ENCODE measurements at regions of chr2 and their contacts with region 1.

Region 1: DNA sequence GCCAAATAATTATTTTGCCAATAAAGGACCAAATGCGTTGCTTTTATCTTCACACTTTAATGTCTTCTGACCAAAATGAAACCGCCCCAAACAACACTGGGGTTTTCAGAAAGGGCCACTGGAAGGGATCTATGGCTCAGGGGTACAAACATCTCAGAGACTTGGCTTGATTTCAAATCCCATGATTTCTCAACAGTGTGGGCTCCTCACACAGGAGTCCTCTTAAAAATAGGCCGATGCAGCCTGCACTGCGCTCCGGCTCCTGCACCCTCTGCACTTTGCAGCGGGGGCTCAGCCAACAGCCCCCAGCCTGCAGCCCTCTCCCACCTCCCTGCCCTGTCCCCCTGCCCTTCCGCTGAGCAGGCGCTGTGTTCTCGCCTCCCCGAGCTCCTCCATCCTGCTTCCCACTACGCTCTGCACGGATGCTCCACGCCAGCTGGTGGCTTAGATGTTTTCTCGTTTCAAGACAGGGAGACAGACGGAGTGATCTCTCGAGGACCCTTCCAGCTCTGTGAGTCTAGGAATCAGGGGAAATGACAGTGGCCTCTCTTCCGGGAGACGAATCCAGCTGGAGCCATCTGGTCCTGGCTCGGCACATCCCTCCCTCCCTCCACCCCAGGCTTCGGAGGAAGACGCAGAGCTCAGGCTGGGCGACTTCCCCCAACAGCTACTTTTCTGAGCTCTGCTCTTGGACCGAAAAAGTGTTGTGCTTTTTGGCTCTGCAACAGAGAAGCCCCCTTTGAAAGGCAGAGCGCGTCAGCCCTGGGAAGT is 71.4 kb downstream of the KCNF1 start:
- DNase-seq: peak; percentile 77 to 87 (median 82)
- ATAC-seq: peak; percentile 72 to 85 (median 78)
- H3K4me3 ChIP-seq: peak overlapping the region in 6 of 12 donors; percentile 1 to 24 (median 14)
- H3K27ac ChIP-seq: peak overlapping the region; percentile 40 to 82 (median 72)
- H3K4me1 ChIP-seq: peaks cover 0 to 23% (median 4%) of the 10 kb centered on the region in 12 donors
- H3K27me3 ChIP-seq: peaks cover 0 to 9% (median 0%) of the 10 kb centered on the region in 9 donors
- CTCF ChIP-seq: no peak
- POLR2A ChIP-seq: no peak

Region 2: DNA sequence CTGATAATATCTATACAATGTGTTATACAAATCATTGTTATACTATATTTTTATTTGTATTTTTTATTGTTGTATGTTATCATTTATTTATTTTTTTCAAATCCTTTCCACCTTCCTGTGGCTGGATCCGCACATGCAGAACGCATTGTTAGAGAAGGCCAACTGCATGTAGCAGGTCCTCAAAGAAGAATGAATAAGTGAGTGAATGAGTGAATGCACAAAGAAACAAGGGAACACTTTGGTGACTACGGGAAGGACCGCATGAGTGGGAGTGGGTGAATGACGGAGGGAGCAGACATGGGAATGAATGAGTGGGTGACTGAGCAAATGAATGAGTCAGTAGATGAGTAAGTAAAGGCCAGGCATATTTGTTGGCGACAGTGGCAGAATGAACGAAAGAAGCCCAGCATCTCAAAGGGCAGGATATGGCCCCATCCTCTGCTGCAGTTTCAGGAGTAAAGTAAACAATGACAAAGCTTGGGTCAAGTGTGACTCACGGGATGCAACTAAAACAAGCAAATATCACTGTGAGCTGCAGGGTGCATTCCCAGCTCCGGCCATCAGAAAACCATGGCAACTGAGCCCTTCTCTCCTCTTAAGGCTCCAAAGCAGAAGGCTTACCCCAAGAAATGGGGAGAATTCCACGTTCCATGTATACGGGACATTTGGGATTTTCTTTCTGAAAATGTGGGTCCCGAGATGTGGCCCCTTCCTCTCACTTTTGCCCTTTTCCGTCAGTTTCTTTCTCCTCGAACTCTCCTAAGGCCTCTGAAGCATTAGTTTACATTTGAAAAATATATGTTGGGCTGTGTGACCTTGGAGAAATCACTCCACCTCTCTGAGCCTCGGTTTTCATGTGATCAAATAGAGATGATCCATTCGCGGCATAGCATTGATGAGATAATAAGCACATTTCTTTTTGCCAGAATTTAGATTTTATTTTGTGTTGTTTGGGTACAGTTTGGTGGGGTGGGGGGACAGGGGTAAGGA is 46.9 kb before region 1 on chr2:
- intact Hi-C with region 1: loop called in 1 of 10 experiments (anchors 5 kb)
- DNase-seq: peak in 1 of 5 donors; percentile 43
- ATAC-seq: peak in 1 of 4 donors; percentile 75
- H3K4me3 ChIP-seq: no peak overlapping the region
- H3K27ac ChIP-seq: no peak overlapping the region
- H3K4me1 ChIP-seq: peaks cover 0 to 6% (median 0%) of the 10 kb centered on the region in 12 donors
- H3K27me3 ChIP-seq: peaks cover 0 to 6% (median 0%) of the 10 kb centered on the region in 9 donors
- CTCF ChIP-seq: no peak
- POLR2A ChIP-seq: no peak

Region 3: GRCh38 chr2:11024259-11024645 is 41.1 kb after region 1 on chr2:
- intact Hi-C with region 1: no loop called
- DNase-seq: no peak
- ATAC-seq: no peak
- H3K4me3 ChIP-seq: no peak overlapping the region
- H3K27ac ChIP-seq: no peak overlapping the region
- H3K4me1 ChIP-seq: no peaks in the 10 kb centered on the region
- H3K27me3 ChIP-seq: peaks cover 0 to 5% (median 0%) of the 10 kb centered on the region in 9 donors
- CTCF ChIP-seq: no peak
- POLR2A ChIP-seq: no peak